K562 (cell line): ENCODE measurements at regions of chr6 and their contacts with region 1.

Region 1: DNA sequence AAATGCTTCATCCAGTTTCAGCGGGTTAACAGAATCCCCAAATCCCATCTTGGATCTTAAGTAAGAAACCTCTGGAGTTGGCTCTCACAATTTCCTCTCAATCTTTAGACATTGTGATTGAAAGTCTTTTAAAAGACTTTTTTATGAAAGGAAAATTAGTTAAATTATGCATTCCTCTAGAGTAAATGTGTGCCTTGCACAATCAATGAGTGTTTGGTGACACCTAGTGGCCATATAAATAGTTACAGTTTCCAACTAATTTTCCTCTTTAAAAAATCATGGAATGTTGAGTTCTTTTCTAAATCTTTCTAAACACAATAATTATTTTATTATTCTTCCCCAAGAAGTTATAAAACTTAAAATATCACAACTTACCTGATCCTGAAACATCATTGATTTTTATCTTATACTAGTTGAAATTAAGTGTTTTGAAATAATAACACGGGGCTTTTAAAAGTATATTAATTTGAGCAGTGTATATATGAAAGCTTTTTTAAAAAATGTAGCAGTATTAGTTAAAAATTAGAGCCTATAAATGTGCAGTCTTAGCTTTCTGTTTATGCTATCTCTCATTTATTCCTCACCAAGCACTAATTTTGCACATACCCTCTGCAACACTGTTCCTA is 66.4 kb downstream of the PKHD1 start:
- DNase-seq: peak; percentile 12 to 38 (median 32)
- ATAC-seq: peak; percentile 66; the same call in 1 of the 3 replicates
- H3K4me3 ChIP-seq: no peak overlapping the region
- H3K27ac ChIP-seq: no peak overlapping the region
- H3K4me1 ChIP-seq: no peaks in the 10 kb centered on the region
- H3K27me3 ChIP-seq: peaks cover 0 to 12% of the 10 kb centered on the region in 2 experiments; a peak in 3 of 5 replicates
- CTCF ChIP-seq: peak; percentile 38 to 81 (median 49); a peak in 4 of 6 replicates
- EP300 ChIP-seq: no peak
- POLR2A ChIP-seq: no peak
- RAD21 ChIP-seq: peak; percentile 72 to 86

Region 2: DNA sequence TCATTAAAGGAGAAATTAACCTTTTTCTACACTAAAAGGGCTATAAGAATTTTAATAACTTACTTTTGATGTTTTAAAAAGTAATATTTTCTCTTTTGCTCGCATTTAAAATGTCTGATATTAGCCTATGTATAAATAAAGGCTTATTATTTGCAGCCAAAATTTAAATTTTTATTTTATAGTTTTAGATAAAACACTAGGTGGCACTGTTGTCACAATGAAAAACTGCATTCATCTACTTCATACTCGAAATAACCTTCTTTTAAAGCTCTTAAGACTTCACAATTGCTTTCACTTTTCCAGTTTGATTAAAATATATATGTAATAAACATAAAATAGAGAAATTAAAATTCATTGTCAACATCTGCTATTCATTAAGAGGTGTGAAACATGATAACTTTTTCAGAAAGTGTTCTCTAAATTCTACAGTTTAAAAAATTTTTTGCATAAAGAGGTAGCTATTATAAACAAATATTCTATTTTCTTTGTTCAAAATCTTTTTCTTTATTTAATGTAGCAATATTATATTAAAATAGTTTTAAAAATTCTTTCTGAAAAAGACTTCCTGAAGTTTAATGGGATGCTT is 1892.5 kb before region 1 on chr6:
- CTCF ChIA-PET with region 1: no interaction called
- POLR2A ChIA-PET with region 1: no interaction called
- in situ Hi-C with region 1: loop called (anchors 25 kb)
- intact Hi-C with region 1: loop called (anchors 5 kb)
- DNase-seq: peak; percentile 6 to 23 (median 20)
- ATAC-seq: no peak
- H3K4me3 ChIP-seq: no peak overlapping the region
- H3K27ac ChIP-seq: no peak overlapping the region
- H3K4me1 ChIP-seq: no peaks in the 10 kb centered on the region
- H3K27me3 ChIP-seq: no peaks in the 10 kb centered on the region
- CTCF ChIP-seq: peak in 1 of 3 experiments; percentile 64; a peak in 2 of 6 replicates
- EP300 ChIP-seq: no peak
- POLR2A ChIP-seq: no peak
- RAD21 ChIP-seq: peak; percentile 59 to 63

Region 3: GRCh38 chr6:51350308-51350904 is 670.7 kb before region 1 on chr6:
- CTCF ChIA-PET with region 1: no interaction called
- POLR2A ChIA-PET with region 1: no interaction called
- in situ Hi-C with region 1: no loop called
- intact Hi-C with region 1: loop called (anchors 10 kb)
- DNase-seq: peak in 3 of 4 experiments; percentile 22 to 30 (median 27)
- ATAC-seq: peak; percentile 74
- H3K4me3 ChIP-seq: no peak overlapping the region
- H3K27ac ChIP-seq: no peak overlapping the region
- H3K4me1 ChIP-seq: no peaks in the 10 kb centered on the region
- H3K27me3 ChIP-seq: no peaks in the 10 kb centered on the region
- CTCF ChIP-seq: peak in 2 of 3 experiments; percentile 25 to 64; a peak in 3 of 6 replicates
- EP300 ChIP-seq: no peak
- POLR2A ChIP-seq: no peak
- RAD21 ChIP-seq: peak; percentile 56 to 68

Region 4: GRCh38 chr6:51855310-51856082 is 165.6 kb before region 1 on chr6:
- CTCF ChIA-PET with region 1: interaction called, 13 read pairs
- POLR2A ChIA-PET with region 1: no interaction called
- in situ Hi-C with region 1: no loop called
- intact Hi-C with region 1: loop called (anchors 10 kb)
- DNase-seq: peak; percentile 47 to 74 (median 61)
- ATAC-seq: peak; percentile 96
- H3K4me3 ChIP-seq: no peak overlapping the region
- H3K27ac ChIP-seq: no peak overlapping the region
- H3K4me1 ChIP-seq: no peaks in the 10 kb centered on the region
- H3K27me3 ChIP-seq: no peaks in the 10 kb centered on the region
- CTCF ChIP-seq: peak; percentile 66 to 76 (median 69)
- EP300 ChIP-seq: no peak
- POLR2A ChIP-seq: no peak
- RAD21 ChIP-seq: peak; percentile 72 to 74

Region 5: GRCh38 chr6:52049252-52050050 is 28.4 kb after region 1 on chr6:
- CTCF ChIA-PET with region 1: no interaction called
- POLR2A ChIA-PET with region 1: no interaction called
- in situ Hi-C with region 1: no loop called
- intact Hi-C with region 1: loop called (anchors 1 kb)
- DNase-seq: peak; percentile 36 to 48 (median 38)
- ATAC-seq: peak; percentile 70
- H3K4me3 ChIP-seq: no peak overlapping the region
- H3K27ac ChIP-seq: no peak overlapping the region
- H3K4me1 ChIP-seq: no peaks in the 10 kb centered on the region
- H3K27me3 ChIP-seq: no peaks in the 10 kb centered on the region; a peak in 1 of 5 replicates
- CTCF ChIP-seq: peak; percentile 43 to 72 (median 61); a peak in 5 of 6 replicates
- EP300 ChIP-seq: no peak
- POLR2A ChIP-seq: no peak
- RAD21 ChIP-seq: peak; percentile 57 to 67

Region 6: GRCh38 chr6:52190409-52190808 is 169.4 kb after region 1 on chr6:
- CTCF ChIA-PET with region 1: no interaction called
- POLR2A ChIA-PET with region 1: no interaction called
- in situ Hi-C with region 1: no loop called
- intact Hi-C with region 1: no loop called
- DNase-seq: no peak
- ATAC-seq: no peak
- H3K4me3 ChIP-seq: no peak overlapping the region
- H3K27ac ChIP-seq: no peak overlapping the region
- H3K4me1 ChIP-seq: no peaks in the 10 kb centered on the region
- H3K27me3 ChIP-seq: no peaks in the 10 kb centered on the region; a peak in 1 of 5 replicates
- CTCF ChIP-seq: no peak
- EP300 ChIP-seq: no peak
- POLR2A ChIP-seq: no peak
- RAD21 ChIP-seq: no peak